Uterus (tissue), 4 donors: ENCODE measurements at regions of chr20 and their contacts with region 1.

Region 1: GRCh38 chr20:49541733-49542513 is 26.0 kb downstream of the PTGIS start:
- DNase-seq: peak; percentile 78 to 83
- H3K4me3 ChIP-seq: no peak overlapping the region
- H3K27ac ChIP-seq: peak overlapping the region; percentile 43 to 74
- H3K4me1 ChIP-seq: no peaks in the 10 kb centered on the region
- H3K27me3 ChIP-seq: no peaks in the 10 kb centered on the region
- CTCF ChIP-seq: peak; percentile 87 to 97 (median 92)
- POLR2A ChIP-seq: no peak

Region 2: GRCh38 chr20:49610701-49611538 is 69.0 kb after region 1 on chr20:
- intact Hi-C with region 1: loop called (anchors 5 kb)
- DNase-seq: peak; percentile 65 to 79
- H3K4me3 ChIP-seq: no peak overlapping the region
- H3K27ac ChIP-seq: no peak overlapping the region
- H3K4me1 ChIP-seq: peaks cover 0 to 7% of the 10 kb centered on the region in 2 donors
- H3K27me3 ChIP-seq: no peaks in the 10 kb centered on the region
- CTCF ChIP-seq: peak; percentile 99 to 100 (median 99)
- POLR2A ChIP-seq: peak in 1 of 2 donors; percentile 44

Region 3: GRCh38 chr20:49747707-49748524 is 206.0 kb after region 1 on chr20:
- intact Hi-C with region 1: no loop called
- DNase-seq: peak; percentile 87 to 89
- H3K4me3 ChIP-seq: no peak overlapping the region
- H3K27ac ChIP-seq: peak overlapping the region; percentile 67 to 76
- H3K4me1 ChIP-seq: peaks cover 0 to 7% of the 10 kb centered on the region in 2 donors
- H3K27me3 ChIP-seq: no peaks in the 10 kb centered on the region
- CTCF ChIP-seq: peak in 1 of 4 experiments; percentile 5
- POLR2A ChIP-seq: no peak

Region 4: DNA sequence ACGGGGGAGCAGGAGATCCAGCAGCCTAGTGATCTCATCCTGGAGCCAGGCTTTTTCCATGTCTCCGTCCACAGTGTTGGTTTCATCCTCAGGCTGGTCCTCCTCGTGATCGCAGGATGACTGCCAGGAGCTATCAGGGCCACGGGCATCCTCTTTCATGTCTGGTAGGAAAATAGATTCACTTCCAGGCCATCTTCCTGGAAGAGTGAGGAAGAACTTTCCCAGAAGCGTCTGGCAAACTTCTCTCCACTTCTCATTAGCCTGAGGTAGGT is 255.4 kb after region 1 on chr20:
- intact Hi-C with region 1: no loop called
- DNase-seq: no peak
- H3K4me3 ChIP-seq: no peak overlapping the region
- H3K27ac ChIP-seq: no peak overlapping the region
- H3K4me1 ChIP-seq: no peaks in the 10 kb centered on the region
- H3K27me3 ChIP-seq: no peaks in the 10 kb centered on the region
- CTCF ChIP-seq: no peak
- POLR2A ChIP-seq: no peak

Region 5: GRCh38 chr20:49888345-49888966 is 346.5 kb after region 1 on chr20:
- intact Hi-C with region 1: loop called (anchors 10 kb)
- DNase-seq: peak; percentile 47 to 52
- H3K4me3 ChIP-seq: no peak overlapping the region
- H3K27ac ChIP-seq: peak overlapping the region; percentile 64 to 70
- H3K4me1 ChIP-seq: peaks cover 0 to 6% of the 10 kb centered on the region in 2 donors
- H3K27me3 ChIP-seq: no peaks in the 10 kb centered on the region
- CTCF ChIP-seq: peak; percentile 51 to 68 (median 56)
- POLR2A ChIP-seq: no peak